ENCODE measurements at regions of chr11 and their contacts with region 1.

Region 1: DNA sequence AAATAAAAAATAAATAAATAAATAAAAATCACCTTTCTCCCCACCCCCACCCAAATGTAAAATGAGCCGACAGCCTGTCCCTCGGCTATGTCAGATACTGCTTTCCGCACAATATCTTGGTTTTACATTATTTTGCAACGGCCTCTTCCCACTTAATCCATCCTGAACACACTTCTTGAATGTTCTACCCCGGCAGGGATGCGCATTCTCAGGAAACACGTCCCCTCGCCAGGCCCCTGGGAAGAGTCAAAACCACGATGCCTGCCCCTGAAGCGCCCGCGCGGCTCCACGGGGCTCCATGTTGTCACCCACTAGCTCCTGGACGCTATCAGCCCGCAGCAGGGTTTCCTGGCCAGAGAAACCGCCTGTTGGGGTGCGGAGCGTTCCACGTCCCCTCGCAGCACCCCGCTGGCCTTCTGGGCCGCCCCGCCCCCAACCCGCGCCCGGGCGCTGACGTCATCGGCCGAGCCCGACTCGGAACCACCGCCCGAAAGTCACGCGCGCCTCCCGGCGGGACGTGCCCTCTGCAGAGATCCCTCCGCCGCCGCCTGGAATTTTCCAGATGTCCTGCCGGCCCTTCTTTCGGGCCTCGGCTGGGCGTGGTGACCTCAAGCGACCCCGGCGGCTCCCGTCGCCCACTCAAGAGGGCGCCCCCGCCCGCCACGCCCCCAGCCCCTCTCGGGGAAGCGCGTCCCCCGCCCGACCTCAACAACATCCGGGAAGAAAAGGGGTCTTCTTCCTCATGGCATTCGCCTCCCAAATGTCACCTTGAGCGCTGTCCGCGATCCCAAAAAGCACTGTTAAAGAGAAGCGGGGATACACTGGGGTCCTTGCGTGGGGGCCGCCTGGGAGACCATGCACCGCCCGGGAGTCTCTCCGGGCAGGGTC is 551 bp upstream of the NEAT1 start:
- DNase-seq: peak; percentile 94
- H3K4me3 ChIP-seq: peak overlapping the region; percentile 96
- CTCF ChIP-seq: no peak

Region 2: DNA sequence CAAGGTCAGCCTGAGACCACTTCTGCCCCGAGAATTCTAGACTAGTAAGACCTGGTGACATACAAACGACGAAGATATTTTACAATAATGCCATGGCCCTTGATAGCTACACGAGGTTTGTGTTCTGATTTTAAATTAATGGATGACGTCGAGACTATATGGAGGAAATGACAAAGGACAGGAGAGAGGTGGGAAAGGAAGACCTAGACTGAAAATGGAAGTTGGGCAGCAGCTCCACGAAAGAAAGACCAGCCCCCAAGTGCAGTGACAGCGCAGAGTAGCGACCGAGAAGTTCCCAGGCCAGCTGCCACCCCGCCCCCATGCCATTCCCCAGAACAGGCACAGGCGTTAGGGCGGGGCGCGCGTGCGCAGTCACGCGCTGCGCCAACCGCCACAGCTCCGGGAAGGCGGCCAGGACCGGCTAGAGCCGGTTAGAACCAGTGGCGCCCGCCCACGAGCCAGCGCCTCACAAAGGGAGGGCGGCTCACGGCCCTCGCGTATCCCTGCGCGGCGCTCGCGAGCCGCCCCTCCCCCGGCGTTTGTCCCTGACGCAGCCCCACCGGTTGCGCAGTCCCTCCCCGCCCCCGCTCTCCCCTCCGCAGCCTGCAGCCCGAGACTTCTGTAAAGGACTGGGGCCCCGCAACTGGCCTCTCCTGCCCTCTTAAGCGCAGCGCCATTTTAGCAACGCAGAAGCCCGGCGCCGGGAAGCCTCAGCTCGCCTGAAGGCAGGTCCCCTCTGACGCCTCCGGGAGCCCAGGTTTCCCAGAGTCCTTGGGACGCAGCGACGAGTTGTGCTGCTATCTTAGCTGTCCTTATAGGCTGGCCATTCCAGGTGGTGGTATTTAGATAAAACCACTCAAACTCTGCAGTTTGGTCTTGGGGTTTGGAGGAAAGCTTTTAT is 75.3 kb after region 1 on chr11:
- in situ Hi-C with region 1: loop called (anchors 5 kb)
- DNase-seq: peak; percentile 93
- H3K4me3 ChIP-seq: peak overlapping the region; percentile 87
- CTCF ChIP-seq: no peak

Measured in astrocyte of the cerebellum (primary cell).